Mammary epithelial cell (primary cell): ENCODE measurements at regions of chr22 and their contacts with region 1.

Region 1: GRCh38 chr22:45645526-45646414 is 25.9 kb upstream of the ATXN10 start:
- DNase-seq: peak; percentile 46
- H3K4me3 ChIP-seq: no peak overlapping the region
- H3K27ac ChIP-seq: no peak overlapping the region
- H3K4me1 ChIP-seq: peaks cover 4% of the 10 kb centered on the region
- H3K27me3 ChIP-seq: no peaks in the 10 kb centered on the region
- CTCF ChIP-seq: peak; percentile 72 to 79

Region 2: DNA sequence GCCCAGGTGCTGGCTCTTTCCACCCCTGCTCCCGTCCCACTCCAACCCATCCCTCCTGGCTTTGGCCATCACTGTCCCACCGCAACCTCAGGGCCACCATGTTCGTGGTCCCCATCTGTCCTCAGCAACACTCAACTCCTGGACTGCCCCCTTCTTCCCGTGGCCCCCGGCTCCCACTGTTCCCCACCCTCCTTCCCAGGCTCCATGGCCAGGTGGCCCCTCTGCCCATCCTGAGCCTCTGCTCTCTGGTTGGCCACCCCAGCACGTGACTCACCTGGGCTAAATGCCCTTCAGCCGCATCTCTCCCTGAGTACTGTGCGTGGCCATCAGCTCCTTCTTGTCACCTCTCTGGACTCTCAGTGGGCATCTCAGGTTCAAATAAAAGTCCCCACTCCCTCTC is 594.4 kb before region 1 on chr22:
- CTCF ChIA-PET with region 1: no interaction called
- dilution Hi-C with region 1: no loop called
- in situ Hi-C with region 1: no loop called
- intact Hi-C with region 1: no loop called
- DNase-seq: no peak
- H3K4me3 ChIP-seq: no peak overlapping the region
- H3K27ac ChIP-seq: no peak overlapping the region
- H3K4me1 ChIP-seq: no peaks in the 10 kb centered on the region
- H3K27me3 ChIP-seq: peaks cover 11% of the 10 kb centered on the region
- CTCF ChIP-seq: no peak

Region 3: GRCh38 chr22:45577746-45578523 is 67.8 kb before region 1 on chr22:
- CTCF ChIA-PET with region 1: no interaction called
- dilution Hi-C with region 1: no loop called
- in situ Hi-C with region 1: loop called in 1 of 2 experiments (anchors 10 kb)
- intact Hi-C with region 1: loop called (anchors 1 kb)
- DNase-seq: peak; percentile 55
- H3K4me3 ChIP-seq: no peak overlapping the region
- H3K27ac ChIP-seq: no peak overlapping the region
- H3K4me1 ChIP-seq: no peaks in the 10 kb centered on the region
- H3K27me3 ChIP-seq: no peaks in the 10 kb centered on the region
- CTCF ChIP-seq: peak; percentile 83 to 98

Region 4: GRCh38 chr22:45584121-45584570 is 61.6 kb before region 1 on chr22:
- CTCF ChIA-PET with region 1: no interaction called
- dilution Hi-C with region 1: no loop called
- in situ Hi-C with region 1: loop called in 1 of 2 experiments (anchors 10 kb)
- intact Hi-C with region 1: no loop called
- DNase-seq: no peak
- H3K4me3 ChIP-seq: no peak overlapping the region
- H3K27ac ChIP-seq: no peak overlapping the region
- H3K4me1 ChIP-seq: peaks cover 3% of the 10 kb centered on the region
- H3K27me3 ChIP-seq: no peaks in the 10 kb centered on the region
- CTCF ChIP-seq: no peak

Region 5: DNA sequence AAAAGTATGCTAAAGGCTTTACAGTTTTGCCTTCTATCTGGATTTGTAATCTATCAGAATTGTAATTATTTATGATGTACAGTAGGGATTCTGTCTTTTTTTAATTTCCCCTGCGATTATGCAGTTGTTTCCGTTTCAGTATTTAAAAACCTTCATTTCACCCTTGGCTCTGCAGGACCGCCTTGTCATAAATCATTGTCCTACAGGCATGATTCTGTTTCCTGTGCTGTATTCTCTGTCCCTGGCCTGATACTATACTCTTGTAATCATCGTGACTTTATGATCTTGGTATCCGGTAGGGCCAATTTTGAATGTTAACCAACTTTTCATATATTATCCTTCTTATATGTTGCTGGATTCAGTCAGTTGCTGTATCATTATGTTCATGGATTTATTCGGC is 177.6 kb after region 1 on chr22:
- CTCF ChIA-PET with region 1: no interaction called
- dilution Hi-C with region 1: no loop called
- in situ Hi-C with region 1: no loop called
- intact Hi-C with region 1: loop called (anchors 1 kb)
- DNase-seq: no peak
- H3K4me3 ChIP-seq: no peak overlapping the region
- H3K27ac ChIP-seq: no peak overlapping the region
- H3K4me1 ChIP-seq: no peaks in the 10 kb centered on the region
- H3K27me3 ChIP-seq: no peaks in the 10 kb centered on the region
- CTCF ChIP-seq: no peak

Region 6: DNA sequence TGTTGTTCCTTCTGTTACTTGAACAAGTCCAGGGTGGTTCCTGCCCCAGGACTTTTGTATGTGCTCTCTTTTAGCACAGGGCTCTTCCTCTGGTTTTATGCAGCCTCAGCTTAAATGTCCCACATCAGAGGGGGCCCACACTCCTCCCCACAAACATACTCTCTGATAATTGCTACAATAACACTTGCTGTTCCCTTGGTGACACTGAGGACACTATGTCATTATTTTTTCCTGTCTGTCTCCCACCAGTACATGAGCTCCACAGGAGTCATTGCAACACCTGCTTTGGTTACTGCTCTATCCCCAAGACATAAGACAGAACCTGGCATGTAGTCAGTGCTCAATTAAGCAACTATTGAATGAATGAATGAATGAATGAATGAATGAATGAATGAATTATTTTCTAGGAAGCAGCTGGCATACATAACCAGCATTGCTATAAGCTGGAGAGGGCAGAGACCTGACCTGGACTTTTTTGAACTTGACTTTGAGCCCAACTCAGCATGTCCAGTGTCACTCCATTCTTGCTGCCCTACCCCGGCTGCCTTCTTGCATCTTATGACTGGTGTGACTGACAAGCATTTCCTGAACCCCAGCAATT is 338.6 kb after region 1 on chr22:
- CTCF ChIA-PET with region 1: no interaction called
- dilution Hi-C with region 1: loop called (anchors 5 kb)
- in situ Hi-C with region 1: loop called in 1 of 2 experiments (anchors 10 kb)
- intact Hi-C with region 1: no loop called
- DNase-seq: no peak
- H3K4me3 ChIP-seq: no peak overlapping the region
- H3K27ac ChIP-seq: no peak overlapping the region
- H3K4me1 ChIP-seq: no peaks in the 10 kb centered on the region
- H3K27me3 ChIP-seq: no peaks in the 10 kb centered on the region
- CTCF ChIP-seq: no peak